Calu3 (cell line): ENCODE measurements at regions of chr6 and their contacts with region 1.

Region 1: DNA sequence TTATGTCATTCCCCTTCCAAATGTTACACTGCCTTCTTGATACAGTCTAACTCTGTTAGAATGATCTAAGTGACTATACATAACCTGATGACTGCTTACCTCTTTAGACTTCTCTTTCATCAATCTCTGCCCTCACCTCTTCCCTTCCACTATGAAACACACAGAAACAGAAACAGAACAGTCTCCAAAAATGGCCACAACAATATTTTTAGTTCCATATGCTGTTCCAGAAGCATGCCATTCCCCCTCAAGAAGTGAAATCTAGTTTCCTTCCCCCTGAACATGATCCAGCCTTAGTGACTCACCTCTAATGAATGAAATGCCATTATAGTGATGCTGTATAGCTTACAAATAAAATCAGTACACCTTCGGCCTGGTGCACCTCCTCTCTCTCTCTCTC is 229.3 kb upstream of the TENT5A start:
- DNase-seq: peak; percentile 23
- H3K4me3 Mint-ChIP-seq: no peak overlapping the region
- H3K27ac Mint-ChIP-seq: peak overlapping the region; percentile 53
- H3K4me1 Mint-ChIP-seq: peaks cover 17% of the 10 kb centered on the region
- H3K27me3 Mint-ChIP-seq: no peaks in the 10 kb centered on the region
- CTCF ChIP-seq: no peak

Region 2: GRCh38 chr6:81105998-81106397 is 875.8 kb before region 1 on chr6:
- CTCF ChIA-PET with region 1: no interaction called
- intact Hi-C with region 1: loop called (anchors 10 kb)
- DNase-seq: no peak
- H3K4me3 Mint-ChIP-seq: no peak overlapping the region
- H3K27ac Mint-ChIP-seq: no peak overlapping the region
- H3K4me1 Mint-ChIP-seq: no peaks in the 10 kb centered on the region
- H3K27me3 Mint-ChIP-seq: no peaks in the 10 kb centered on the region
- CTCF ChIP-seq: no peak

Region 3: GRCh38 chr6:81241126-81242041 is 740.4 kb before region 1 on chr6:
- CTCF ChIA-PET with region 1: no interaction called
- intact Hi-C with region 1: loop called (anchors 5 kb)
- DNase-seq: no peak
- H3K4me3 Mint-ChIP-seq: no peak overlapping the region
- H3K27ac Mint-ChIP-seq: no peak overlapping the region
- H3K4me1 Mint-ChIP-seq: no peaks in the 10 kb centered on the region
- H3K27me3 Mint-ChIP-seq: no peaks in the 10 kb centered on the region
- CTCF ChIP-seq: peak; percentile 10

Region 4: DNA sequence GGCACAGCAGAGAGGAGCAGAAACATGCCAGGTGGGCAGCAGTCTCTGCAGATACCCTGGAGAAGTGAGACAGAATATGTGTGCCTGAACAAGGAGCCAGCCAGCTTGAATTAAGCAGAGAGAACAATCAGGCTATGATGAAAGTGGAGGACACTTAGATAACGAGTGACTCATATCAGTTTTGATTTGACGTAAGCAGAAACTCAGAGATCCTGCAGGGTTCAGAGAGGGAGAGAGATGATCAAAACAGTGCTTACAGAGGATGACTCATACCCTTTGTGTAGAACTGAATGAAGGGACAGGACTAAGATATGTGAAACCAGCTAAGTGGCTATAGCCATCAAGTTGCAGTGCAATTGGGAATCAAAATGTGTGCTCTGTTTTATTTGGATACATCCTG is 530.0 kb before region 1 on chr6:
- CTCF ChIA-PET with region 1: no interaction called
- intact Hi-C with region 1: loop called (anchors 5 kb)
- DNase-seq: peak; percentile 16
- H3K4me3 Mint-ChIP-seq: no peak overlapping the region
- H3K27ac Mint-ChIP-seq: no peak overlapping the region
- H3K4me1 Mint-ChIP-seq: peaks cover 7% of the 10 kb centered on the region
- H3K27me3 Mint-ChIP-seq: no peaks in the 10 kb centered on the region
- CTCF ChIP-seq: no peak

Region 5: DNA sequence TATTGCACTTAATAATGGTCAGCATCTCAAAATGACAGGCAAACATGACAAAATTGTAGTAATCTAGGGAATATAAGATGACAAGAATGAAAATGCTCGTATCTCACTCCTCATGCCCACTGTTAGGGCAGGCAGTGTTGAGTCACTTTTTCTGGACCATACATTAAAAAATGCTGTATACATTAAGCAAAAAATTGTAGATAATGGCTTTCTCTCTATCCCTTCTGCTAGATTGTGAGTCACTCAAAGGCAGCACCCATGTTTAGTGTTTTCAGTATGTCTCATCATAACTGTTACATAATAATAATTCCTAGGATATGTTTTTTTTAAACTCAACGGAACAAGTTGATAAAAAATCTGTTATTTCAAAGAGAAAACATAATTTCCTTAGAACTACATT is 428.6 kb before region 1 on chr6:
- CTCF ChIA-PET with region 1: no interaction called
- intact Hi-C with region 1: loop called (anchors 10 kb)
- DNase-seq: no peak
- H3K4me3 Mint-ChIP-seq: no peak overlapping the region
- H3K27ac Mint-ChIP-seq: no peak overlapping the region
- H3K4me1 Mint-ChIP-seq: peaks cover 8% of the 10 kb centered on the region
- H3K27me3 Mint-ChIP-seq: no peaks in the 10 kb centered on the region
- CTCF ChIP-seq: no peak

Region 6: DNA sequence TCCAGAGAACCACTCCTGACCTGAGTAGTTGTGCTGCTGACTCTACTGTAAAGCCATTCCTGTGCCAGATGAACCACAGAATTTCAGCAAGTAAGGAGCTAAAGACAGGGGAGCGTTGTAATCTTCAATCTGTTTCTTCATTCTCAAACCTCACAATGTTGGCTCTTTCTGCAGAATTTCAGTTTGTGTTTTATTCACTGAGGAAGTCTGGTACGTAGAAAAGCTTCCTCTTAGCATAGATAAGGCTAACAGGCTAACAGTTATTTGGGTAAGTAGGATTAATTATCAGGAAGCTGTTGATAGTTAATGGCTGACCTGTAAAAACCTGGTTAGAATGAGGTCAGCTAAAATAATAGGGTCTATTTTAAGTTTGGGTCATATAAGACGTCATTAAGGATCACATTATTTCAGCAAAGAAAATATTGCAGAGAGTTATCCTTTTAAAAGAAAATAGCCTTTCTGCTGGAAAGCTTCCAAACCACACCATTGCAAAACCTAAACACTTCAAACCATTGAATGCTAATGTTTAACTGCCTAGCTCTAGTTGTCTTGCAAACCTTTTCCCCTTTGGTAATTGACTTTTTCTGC is 215.2 kb before region 1 on chr6:
- CTCF ChIA-PET with region 1: no interaction called
- intact Hi-C with region 1: loop called (anchors 5 kb)
- DNase-seq: peak; percentile 67
- H3K4me3 Mint-ChIP-seq: peak overlapping the region; percentile 29
- H3K27ac Mint-ChIP-seq: peak overlapping the region; percentile 78
- H3K4me1 Mint-ChIP-seq: peaks cover 28% of the 10 kb centered on the region
- H3K27me3 Mint-ChIP-seq: peaks cover 13% of the 10 kb centered on the region
- CTCF ChIP-seq: no peak

Region 7: DNA sequence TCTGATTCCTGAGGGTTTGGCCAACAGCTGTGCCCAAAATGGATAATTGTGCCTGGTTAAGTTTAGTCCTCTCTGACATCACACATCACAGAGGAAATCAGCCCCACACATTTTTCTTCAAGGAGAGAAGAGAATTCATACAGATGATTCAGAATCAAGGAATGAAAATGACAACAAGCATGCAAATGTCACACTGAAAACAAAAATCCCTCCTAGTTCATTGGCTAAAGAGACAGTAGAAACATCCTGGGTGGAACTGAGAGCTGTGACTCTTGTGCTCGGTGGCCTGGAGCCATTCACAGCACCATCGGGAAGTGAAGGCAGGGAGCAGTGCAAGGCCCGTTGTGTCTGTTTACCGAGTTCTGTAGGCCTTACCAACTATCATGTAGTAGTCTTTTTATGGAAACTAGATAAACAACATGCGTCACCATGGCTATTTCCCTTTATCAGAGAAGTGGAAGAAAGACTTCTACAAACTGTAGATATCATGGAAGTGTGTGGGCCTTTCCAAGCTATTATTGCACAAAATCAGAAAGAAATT is 147.6 kb before region 1 on chr6:
- CTCF ChIA-PET with region 1: no interaction called
- intact Hi-C with region 1: loop called (anchors 2 kb)
- DNase-seq: peak; percentile 16
- H3K4me3 Mint-ChIP-seq: no peak overlapping the region
- H3K27ac Mint-ChIP-seq: no peak overlapping the region
- H3K4me1 Mint-ChIP-seq: peaks cover 39% of the 10 kb centered on the region
- H3K27me3 Mint-ChIP-seq: no peaks in the 10 kb centered on the region
- CTCF ChIP-seq: no peak

Region 8: GRCh38 chr6:81940451-81940985 is 41.3 kb before region 1 on chr6:
- CTCF ChIA-PET with region 1: no interaction called
- intact Hi-C with region 1: no loop called
- DNase-seq: no peak
- H3K4me3 Mint-ChIP-seq: no peak overlapping the region
- H3K27ac Mint-ChIP-seq: no peak overlapping the region
- H3K4me1 Mint-ChIP-seq: peaks cover 48% of the 10 kb centered on the region
- H3K27me3 Mint-ChIP-seq: no peaks in the 10 kb centered on the region
- CTCF ChIP-seq: no peak